ENCODE measurements at regions of chr9 and their contacts with region 1.

Region 1: GRCh38 chr9:133103183-133103986 is 17.7 kb downstream of the RALGDS start:
- DNase-seq: no peak
- H3K4me3 ChIP-seq: no peak overlapping the region
- H3K27ac ChIP-seq: peak overlapping the region; percentile 31
- H3K4me1 ChIP-seq: peaks cover 8% of the 10 kb centered on the region
- H3K27me3 ChIP-seq: no peaks in the 10 kb centered on the region
- CTCF ChIP-seq: peak; percentile 94 to 98 (median 95)
- POLR2A ChIP-seq: no peak

Region 2: GRCh38 chr9:132957805-132958204 is 145.6 kb before region 1 on chr9:
- intact Hi-C with region 1: no loop called
- DNase-seq: no peak
- H3K4me3 ChIP-seq: no peak overlapping the region
- H3K27ac ChIP-seq: no peak overlapping the region
- H3K4me1 ChIP-seq: no peaks in the 10 kb centered on the region
- H3K27me3 ChIP-seq: no peaks in the 10 kb centered on the region
- CTCF ChIP-seq: no peak
- POLR2A ChIP-seq: no peak

Region 3: GRCh38 chr9:133144137-133144903 is 40.9 kb after region 1 on chr9:
- intact Hi-C with region 1: loop called (anchors 1 kb)
- DNase-seq: no peak
- H3K4me3 ChIP-seq: peak overlapping the region; percentile 33 to 56
- H3K27ac ChIP-seq: peak overlapping the region; percentile 51
- H3K4me1 ChIP-seq: peaks cover 86% of the 10 kb centered on the region
- H3K27me3 ChIP-seq: no peaks in the 10 kb centered on the region
- CTCF ChIP-seq: peak; percentile 94 to 98 (median 96)
- POLR2A ChIP-seq: no peak

Region 4: DNA sequence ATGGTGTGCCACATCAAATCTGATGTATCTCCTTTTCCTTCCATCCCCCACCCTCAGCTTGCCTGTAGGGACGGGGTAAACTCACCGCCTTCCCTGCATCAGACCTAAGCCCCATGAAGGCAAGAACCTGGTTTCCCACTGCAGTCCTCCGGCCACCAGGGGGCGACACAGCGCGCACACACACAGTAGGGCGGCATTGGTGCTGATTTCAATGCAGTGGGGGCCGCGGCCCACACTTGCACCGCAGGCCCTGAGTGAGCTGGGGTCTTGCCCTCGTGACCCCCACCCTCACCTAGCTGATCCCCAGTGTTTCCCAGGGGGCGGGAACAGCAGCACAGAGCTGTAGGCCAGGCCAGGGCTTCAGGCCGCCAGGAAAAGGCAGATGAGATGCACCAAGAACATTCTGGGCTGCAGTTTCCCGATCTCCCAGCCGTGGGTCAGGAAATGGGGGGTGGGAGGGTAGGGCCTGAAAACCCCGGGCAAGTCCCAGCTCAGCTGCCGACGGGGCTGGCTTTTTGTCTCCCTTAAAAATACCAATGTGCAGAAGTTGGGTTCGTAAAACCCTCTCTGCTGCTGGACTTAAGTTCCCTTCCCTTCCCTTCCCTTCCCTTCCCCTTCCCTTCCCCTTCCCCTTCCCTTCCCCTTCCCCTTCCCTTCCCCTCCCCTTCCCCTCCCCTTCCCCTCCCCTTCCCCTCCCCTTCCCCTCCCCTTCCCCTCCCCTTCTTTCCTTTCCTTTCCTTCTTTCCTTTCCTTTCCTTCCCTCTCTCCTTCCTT is 486.3 kb after region 1 on chr9:
- intact Hi-C with region 1: no loop called
- DNase-seq: no peak
- H3K4me3 ChIP-seq: no peak overlapping the region
- H3K27ac ChIP-seq: no peak overlapping the region
- H3K4me1 ChIP-seq: peaks cover 16% of the 10 kb centered on the region
- H3K27me3 ChIP-seq: peaks cover 5% of the 10 kb centered on the region
- CTCF ChIP-seq: no peak
- POLR2A ChIP-seq: no peak

Measured in vagina (tissue), 2 donors.